Activated CD8-positive, alpha-beta T cell treated with anti-CD3 and anti-CD28 coated beads, Interleukin-2, amount 10 ng/mL, durations not matched to agents 7 days and 5 days (primary cell): ENCODE measurements at regions of chr18 and their contacts with region 1.

Region 1: DNA sequence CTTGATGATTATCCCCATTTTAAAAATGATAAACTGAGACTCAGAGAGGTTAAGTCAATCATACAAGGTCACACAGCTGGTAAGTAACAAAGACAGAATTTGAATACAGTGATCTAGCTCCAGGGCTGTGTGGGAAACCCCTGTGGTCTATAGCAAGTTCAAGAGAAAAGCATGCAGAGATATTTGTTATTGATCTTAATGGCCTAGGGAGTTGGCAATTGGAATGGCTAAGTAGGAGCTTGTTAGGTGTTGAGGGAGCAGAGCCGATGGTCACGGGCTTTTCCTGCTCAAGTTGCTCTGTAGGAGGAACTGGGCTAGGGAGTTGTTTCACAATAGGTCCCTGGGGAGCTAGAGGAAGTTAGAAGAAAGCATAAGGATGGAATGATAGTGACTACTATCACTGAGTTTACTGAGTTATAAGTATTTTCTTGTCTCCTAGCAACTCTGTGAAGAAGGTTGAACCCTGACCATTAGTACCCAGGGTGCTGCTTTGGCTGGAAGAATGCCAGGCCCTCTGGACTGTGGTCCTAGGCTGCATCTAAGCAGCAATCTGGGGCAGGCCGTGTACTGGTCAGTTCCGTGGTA is 30.0 kb downstream of the RNF125 start:
- DNase-seq: peak; percentile 31
- ATAC-seq: peak; percentile 62
- H3K4me3 Mint-ChIP-seq: peak overlapping the region; percentile 17
- H3K27ac Mint-ChIP-seq: peak overlapping the region; percentile 85
- H3K4me1 Mint-ChIP-seq: peaks cover 47% of the 10 kb centered on the region
- H3K27me3 Mint-ChIP-seq: no peaks in the 10 kb centered on the region

Region 2: DNA sequence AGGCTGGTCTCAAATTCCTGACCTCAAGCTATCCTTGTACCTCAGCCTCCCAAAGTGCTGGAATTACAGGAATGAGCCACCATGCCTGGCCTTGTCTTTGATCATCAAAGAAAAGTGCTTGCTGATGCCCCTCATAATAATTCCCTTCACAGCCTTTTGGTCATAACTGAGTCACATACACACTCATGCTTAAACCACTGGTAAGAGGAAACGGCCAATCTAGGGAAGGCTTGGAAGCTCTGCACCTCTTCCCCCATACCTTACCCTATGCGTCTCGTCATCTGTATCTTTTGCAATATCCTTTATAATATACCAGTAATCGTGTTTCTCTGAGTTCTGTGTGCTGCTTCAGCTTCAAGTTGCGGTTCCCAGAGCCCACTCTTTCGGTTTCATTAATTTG is 38.3 kb after region 1 on chr18:
- CTCF ChIA-PET with region 1: interaction called, 13 read pairs
- POLR2A ChIA-PET with region 1: interaction called, 14 read pairs
- DNase-seq: no peak
- ATAC-seq: no peak
- H3K4me3 Mint-ChIP-seq: no peak overlapping the region
- H3K27ac Mint-ChIP-seq: no peak overlapping the region
- H3K4me1 Mint-ChIP-seq: peaks cover 53% of the 10 kb centered on the region
- H3K27me3 Mint-ChIP-seq: no peaks in the 10 kb centered on the region

Region 3: GRCh38 chr18:32092422-32093101 is 44.0 kb after region 1 on chr18:
- CTCF ChIA-PET with region 1: no interaction called
- POLR2A ChIA-PET with region 1: interaction called, 14 read pairs
- DNase-seq: peak; percentile 100
- ATAC-seq: peak; percentile 91
- H3K4me3 Mint-ChIP-seq: peak overlapping the region; percentile 96
- H3K27ac Mint-ChIP-seq: peak overlapping the region; percentile 98
- H3K4me1 Mint-ChIP-seq: peaks cover 50% of the 10 kb centered on the region
- H3K27me3 Mint-ChIP-seq: no peaks in the 10 kb centered on the region

Region 4: DNA sequence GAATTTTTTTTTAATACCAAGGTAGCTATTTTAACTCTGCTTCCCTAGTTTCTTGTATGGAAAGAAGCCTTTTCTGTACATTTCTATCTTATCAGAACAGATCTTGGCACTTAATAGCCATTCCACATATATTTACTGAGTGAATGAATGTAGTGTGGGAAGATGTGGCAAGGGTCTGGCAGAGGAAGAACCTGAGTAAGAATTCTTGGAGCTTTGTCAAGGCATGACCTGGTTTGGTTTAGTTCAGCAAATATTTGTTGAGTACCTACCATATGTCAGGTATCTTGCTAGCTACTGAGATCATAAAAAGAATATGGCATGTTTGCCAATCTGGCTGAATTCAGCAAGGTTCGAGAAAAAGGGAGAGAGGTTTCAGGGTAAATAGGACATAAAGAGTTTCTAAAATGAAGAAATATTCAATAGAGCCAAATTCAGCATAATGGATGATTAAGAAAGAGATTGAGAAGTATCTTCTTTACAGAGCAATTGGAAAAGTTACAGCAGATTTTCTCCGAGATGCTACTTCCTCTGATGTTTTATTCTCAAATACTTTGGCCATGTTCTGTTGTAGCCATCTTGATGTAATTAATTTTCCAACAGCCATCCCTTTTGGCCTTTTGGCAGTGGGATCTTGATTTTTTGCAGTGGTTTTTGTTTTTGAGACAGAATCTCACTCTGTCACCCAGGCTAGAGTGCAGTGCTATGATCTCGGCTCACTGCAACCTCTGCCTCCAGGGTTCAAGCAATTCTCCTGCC is 119.6 kb after region 1 on chr18:
- CTCF ChIA-PET with region 1: no interaction called
- POLR2A ChIA-PET with region 1: no interaction called
- DNase-seq: no peak
- ATAC-seq: no peak
- H3K4me3 Mint-ChIP-seq: no peak overlapping the region
- H3K27ac Mint-ChIP-seq: no peak overlapping the region
- H3K4me1 Mint-ChIP-seq: no peaks in the 10 kb centered on the region
- H3K27me3 Mint-ChIP-seq: peaks cover 3% of the 10 kb centered on the region